ENCODE measurements at regions of chr11 and their contacts with region 1.

Region 1: DNA sequence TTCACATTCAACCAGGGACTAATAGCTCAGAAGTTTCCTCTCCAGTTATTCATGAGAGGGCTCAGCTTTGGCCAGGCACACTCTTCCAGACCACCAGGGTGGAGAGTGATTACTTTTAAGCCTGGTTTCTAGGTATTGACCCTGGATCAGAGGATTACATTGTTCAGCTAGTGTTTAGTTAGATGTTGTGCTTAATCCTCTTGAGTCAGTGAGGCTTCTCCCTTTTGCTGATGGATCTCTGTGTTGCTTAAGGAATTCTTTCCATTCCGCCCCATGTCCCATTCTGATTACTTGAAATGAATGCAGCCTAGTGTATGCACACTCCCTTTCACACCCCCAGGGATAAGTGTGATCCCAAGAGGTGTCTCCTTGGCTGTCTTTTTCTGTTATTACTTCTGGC is 271.7 kb upstream of the ANO5 start:
- DNase-seq: no peak
- H3K4me3 ChIP-seq: no peak overlapping the region
- H3K27ac ChIP-seq: no peak overlapping the region
- H3K4me1 ChIP-seq: no peaks in the 10 kb centered on the region
- H3K27me3 ChIP-seq: no peaks in the 10 kb centered on the region
- CTCF ChIP-seq: no peak

Region 2: GRCh38 chr11:21933095-21933494 is 11.9 kb after region 1 on chr11:
- CTCF ChIA-PET with region 1: interaction called, 10 read pairs
- dilution Hi-C with region 1: no loop called
- in situ Hi-C with region 1: no loop called
- intact Hi-C with region 1: no loop called
- DNase-seq: no peak
- H3K4me3 ChIP-seq: no peak overlapping the region
- H3K27ac ChIP-seq: no peak overlapping the region
- H3K4me1 ChIP-seq: no peaks in the 10 kb centered on the region
- H3K27me3 ChIP-seq: no peaks in the 10 kb centered on the region
- CTCF ChIP-seq: peak; percentile 29 to 34

Measured in mammary epithelial cell (primary cell).